GM10248 (cell line): ENCODE measurements at regions of chr12 and their contacts with region 1.

Region 1: GRCh38 chr12:119444456-119445044 is 110.0 kb downstream of the CCDC60 start:
- DNase-seq: peak; percentile 67
- CTCF ChIP-seq: peak; percentile 98

Region 2: GRCh38 chr12:119412811-119413794 is 31.4 kb before region 1 on chr12:
- CTCF ChIA-PET with region 1: interaction called, 16 read pairs
- POLR2A ChIA-PET with region 1: no interaction called
- DNase-seq: peak; percentile 58
- CTCF ChIP-seq: peak; percentile 75

Region 3: DNA sequence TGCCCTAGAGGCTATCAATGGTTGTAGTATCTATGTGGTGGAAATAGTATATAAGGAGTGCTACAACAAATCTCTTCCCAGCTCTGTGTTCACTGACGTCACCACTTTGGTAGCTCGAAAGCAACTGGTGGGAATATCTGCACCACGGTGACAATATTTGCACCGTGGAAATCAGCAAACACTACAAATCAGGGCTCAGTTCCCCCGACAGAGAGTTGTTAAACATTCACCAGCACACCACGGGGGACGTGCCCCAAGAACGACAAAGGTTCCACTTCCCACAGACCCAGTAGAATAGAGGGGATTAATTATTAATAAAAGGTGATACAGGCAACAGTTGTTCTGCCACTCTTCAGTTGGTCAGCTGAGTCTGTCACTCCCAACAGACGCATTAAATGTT is 11.6 kb before region 1 on chr12:
- CTCF ChIA-PET with region 1: interaction called, 81 read pairs
- POLR2A ChIA-PET with region 1: no interaction called
- DNase-seq: no peak
- CTCF ChIP-seq: no peak

Region 4: GRCh38 chr12:119461636-119462214 is 17.2 kb after region 1 on chr12:
- CTCF ChIA-PET with region 1: interaction called, 30 read pairs
- POLR2A ChIA-PET with region 1: no interaction called
- DNase-seq: no peak
- CTCF ChIP-seq: no peak

Region 5: GRCh38 chr12:119544765-119545625 is 100.4 kb after region 1 on chr12:
- CTCF ChIA-PET with region 1: interaction called, 121 read pairs
- POLR2A ChIA-PET with region 1: no interaction called
- DNase-seq: peak; percentile 67
- CTCF ChIP-seq: peak; percentile 76

Region 6: GRCh38 chr12:119649202-119649808 is 204.8 kb after region 1 on chr12:
- CTCF ChIA-PET with region 1: interaction called, 13 read pairs
- POLR2A ChIA-PET with region 1: no interaction called
- DNase-seq: peak; percentile 65
- CTCF ChIP-seq: peak; percentile 33

Region 7: DNA sequence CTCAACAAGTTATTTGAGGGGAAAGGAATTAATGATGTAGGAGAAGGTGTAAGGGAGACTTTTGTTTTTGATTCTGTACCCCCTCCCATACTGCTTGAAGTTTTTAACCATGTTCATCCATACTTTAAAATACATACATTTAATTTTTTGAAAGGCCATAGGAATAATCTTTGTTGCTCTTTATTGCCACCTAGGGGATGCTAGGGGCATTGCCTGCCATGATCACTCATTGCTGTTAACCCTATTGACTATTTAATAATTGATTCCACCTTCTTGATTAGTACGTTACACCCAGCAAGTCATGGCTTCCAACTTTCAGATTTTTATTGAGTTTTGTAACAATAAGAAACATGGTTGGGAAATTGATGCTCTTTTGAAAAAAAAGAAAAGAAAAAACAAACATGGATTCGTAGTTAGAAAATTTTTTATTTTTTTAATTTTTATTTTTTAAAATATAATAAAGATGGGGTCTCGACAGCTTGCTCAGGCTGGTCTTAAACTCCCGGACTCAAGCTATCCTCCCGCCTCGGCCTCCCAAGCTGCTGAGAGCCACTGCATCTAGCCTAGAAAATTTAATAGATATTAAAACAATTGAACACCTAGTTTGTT is 214.8 kb after region 1 on chr12:
- CTCF ChIA-PET with region 1: interaction called, 12 read pairs
- POLR2A ChIA-PET with region 1: no interaction called
- DNase-seq: peak; percentile 59
- CTCF ChIP-seq: peak; percentile 64